Right ventricle myocardium superior (tissue), 1 donor: ENCODE measurements at regions of chr19 and their contacts with region 1.

Region 1: GRCh38 chr19:36573020-36573885 is at the start of gene ZNF529:
- DNase-seq: peak; percentile 92
- ATAC-seq: peak; percentile 99
- total RNA-seq, gene ZNF529: 13.4 TPM

Region 2: DNA sequence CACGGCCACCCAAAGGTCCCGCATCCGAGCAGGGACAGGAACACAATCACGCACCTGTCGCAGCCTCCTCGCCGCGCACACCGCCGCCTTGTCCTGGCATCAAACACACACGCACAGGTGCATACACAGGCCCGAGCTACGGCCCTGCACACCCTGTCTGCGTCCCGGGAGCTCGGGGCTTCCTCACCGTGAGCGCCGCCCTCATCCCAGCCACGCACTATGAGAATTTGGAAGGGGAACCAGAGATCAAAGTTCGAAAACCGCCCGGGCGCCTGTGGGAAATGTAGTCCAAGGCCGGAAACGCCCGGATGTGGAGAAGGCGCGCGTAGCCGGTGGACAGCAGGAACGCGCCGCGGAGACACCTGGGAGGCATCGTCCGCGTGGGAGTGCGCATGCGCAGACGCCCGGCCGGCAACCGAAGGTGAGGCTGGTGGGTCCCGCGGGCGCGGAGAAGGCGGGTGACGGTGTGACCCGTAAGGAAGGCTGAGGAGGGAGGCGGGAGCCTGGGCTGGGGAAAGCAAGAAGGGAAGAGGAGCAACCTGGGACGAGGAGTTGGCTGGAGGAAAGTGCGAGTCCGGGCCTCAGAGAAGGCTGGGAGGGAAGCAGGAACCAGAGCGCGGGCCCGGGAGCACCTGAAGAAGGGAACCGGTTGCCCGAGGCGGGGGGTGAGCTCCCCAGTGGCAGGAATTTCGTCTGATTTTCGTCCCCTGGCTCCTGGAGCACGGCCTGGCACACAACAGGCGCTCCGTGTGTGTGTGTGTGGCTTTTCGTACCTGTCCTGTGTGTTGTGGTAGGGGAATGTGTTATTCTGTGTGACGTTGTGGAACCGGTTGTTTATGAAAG is 114.2 kb after region 1 on chr19 and contains the start of gene ZNF567:
- intact Hi-C with region 1: loop called (anchors 5 kb)
- DNase-seq: peak; percentile 99
- ATAC-seq: peak; percentile 99
- total RNA-seq, gene ZNF567: 3.1 TPM